ENCODE measurements at regions of chr17 and their contacts with region 1.

Region 1: DNA sequence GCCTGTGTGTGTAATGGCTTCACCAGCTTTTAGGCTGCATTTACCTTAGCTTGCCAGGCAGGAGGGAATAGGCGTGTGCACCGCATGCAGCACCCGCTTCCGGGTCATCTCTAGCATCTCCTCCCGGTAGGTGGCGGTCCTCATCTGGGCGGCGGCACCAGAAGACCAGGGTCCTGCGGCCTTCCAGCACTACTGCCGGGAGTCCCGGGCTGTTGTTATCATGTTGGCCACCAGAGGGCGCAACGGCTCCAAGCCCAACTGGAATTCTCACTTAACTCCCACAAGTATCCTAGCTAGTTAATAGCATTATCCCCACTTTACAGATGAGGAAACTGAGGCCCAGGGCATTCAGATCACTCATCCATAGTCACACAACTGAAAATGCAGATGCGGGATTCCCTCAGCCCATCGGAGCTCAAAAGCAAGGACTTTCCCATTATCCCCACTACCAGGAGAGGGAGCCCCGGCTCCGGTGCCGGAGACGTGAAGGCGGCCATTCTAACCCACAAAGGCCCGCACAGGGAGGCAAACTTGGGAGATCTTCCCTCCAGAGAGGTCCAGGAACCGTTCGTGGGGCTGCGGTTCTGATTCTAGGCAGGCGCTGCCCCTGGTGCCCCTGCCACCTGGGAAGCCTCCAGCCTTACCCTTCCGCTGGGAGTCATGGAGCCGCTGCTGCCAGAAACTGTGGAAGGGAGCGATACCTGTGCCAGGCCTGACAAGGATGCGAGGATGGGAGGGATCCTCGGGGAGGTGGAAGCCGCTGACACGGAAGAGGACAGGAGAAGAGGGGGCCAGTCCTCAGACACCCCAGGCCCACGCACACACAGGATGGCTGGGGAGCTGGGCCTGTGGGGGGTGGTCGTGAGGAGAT is 23.9 kb downstream of the LGALS9 start:
- H3K4me3 ChIP-seq: no peak overlapping the region
- H3K27ac ChIP-seq: no peak overlapping the region
- H3K4me1 ChIP-seq: no peaks in the 10 kb centered on the region
- CTCF ChIP-seq: peak; percentile 96

Region 2: GRCh38 chr17:27353461-27354050 is 301.3 kb before region 1 on chr17:
- CTCF ChIA-PET with region 1: interaction called, 12 read pairs
- POLR2A ChIA-PET with region 1: no interaction called
- H3K4me3 ChIP-seq: peak overlapping the region; percentile 79
- H3K27ac ChIP-seq: peak overlapping the region; percentile 85
- H3K4me1 ChIP-seq: no peaks in the 10 kb centered on the region; the same call in 1 of the 2 replicates
- CTCF ChIP-seq: 0 out of 2 replicates have a peak, but pooled peaks have one; percentile 9

Region 3: DNA sequence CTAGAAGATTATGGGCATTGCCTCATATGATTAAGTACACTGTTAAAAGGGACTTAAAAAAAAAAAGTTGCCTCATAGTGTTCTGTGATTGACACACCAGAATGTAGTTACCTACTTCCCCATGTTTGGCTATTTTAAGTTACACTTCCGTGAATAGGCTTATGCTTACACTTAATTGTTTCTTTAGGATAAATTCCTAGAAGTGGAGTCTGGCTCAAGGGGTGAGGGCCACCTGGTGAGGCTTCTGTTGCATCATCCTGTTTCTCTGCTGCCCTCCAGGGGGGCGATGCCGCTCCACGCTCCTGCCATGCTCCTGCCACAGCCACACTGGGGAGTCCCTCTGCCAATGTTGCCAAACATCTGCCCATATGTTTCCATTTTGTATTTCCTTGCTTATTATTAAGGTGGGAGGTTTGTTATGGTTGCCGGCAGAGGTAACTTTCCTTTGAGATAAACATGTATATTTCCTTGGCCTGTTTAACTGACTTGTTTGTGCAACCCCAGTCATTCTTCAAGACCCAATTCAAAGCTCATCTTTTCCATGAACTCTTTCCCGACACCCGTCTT is 125.6 kb before region 1 on chr17:
- CTCF ChIA-PET with region 1: no interaction called
- POLR2A ChIA-PET with region 1: no interaction called
- H3K4me3 ChIP-seq: no peak overlapping the region
- H3K27ac ChIP-seq: peak overlapping the region; percentile 25; the same call in 1 of the 2 replicates
- H3K4me1 ChIP-seq: peaks cover 21% of the 10 kb centered on the region
- CTCF ChIP-seq: no peak

Region 4: DNA sequence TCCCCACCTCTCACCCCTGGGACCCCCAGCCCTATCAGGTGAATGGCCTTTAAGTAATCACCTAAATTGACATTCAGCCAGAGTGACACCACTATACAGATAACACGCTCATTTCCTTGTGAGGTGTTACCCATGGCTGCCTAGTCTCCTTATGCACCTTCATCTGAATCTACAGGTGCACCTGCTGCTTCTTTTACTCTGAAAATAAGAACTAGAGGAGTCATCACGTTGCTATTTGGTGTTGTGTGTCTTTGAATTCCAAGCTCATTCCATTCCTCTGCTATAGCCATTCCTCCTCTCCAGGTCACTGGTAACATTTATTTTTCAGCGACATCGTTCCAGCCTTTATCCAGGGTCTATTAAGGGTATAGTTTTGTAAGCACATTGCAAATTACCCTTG is 14.1 kb before region 1 on chr17:
- CTCF ChIA-PET with region 1: interaction called, 10 read pairs
- POLR2A ChIA-PET with region 1: no interaction called
- H3K4me3 ChIP-seq: no peak overlapping the region
- H3K27ac ChIP-seq: no peak overlapping the region
- H3K4me1 ChIP-seq: no peaks in the 10 kb centered on the region
- CTCF ChIP-seq: no peak

Region 5: DNA sequence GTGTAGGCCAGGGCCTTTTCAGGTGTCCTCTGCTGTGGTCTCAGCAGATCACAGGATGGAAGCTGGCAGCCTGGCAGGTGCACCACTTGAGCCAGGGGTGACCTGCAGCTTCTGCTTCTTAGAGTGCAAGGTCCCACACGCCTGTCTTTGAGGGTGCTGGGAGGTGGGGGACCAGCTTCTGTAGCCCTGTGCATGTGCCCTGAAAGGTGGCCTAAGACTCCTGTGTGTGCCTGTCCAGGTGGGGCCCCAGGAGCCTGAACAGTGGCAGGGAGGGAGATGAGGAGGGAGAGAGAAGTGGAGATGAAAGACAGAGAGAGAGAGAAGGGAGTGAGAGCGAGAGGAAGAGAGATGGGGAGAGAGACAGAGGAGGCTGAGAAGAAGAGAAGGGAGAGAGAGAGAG is 22.3 kb after region 1 on chr17:
- CTCF ChIA-PET with region 1: interaction called, 22 read pairs
- POLR2A ChIA-PET with region 1: no interaction called
- H3K4me3 ChIP-seq: no peak overlapping the region
- H3K27ac ChIP-seq: no peak overlapping the region
- H3K4me1 ChIP-seq: no peaks in the 10 kb centered on the region
- CTCF ChIP-seq: no peak

Region 6: GRCh38 chr17:27760069-27760885 is 105.4 kb after region 1 on chr17:
- CTCF ChIA-PET with region 1: interaction called, 278 read pairs
- POLR2A ChIA-PET with region 1: interaction called, 4 read pairs
- H3K4me3 ChIP-seq: no peak overlapping the region
- H3K27ac ChIP-seq: no peak overlapping the region
- H3K4me1 ChIP-seq: no peaks in the 10 kb centered on the region
- CTCF ChIP-seq: peak; percentile 87